ENCODE measurements at regions of chr6 and their contacts with region 1.

Region 1: DNA sequence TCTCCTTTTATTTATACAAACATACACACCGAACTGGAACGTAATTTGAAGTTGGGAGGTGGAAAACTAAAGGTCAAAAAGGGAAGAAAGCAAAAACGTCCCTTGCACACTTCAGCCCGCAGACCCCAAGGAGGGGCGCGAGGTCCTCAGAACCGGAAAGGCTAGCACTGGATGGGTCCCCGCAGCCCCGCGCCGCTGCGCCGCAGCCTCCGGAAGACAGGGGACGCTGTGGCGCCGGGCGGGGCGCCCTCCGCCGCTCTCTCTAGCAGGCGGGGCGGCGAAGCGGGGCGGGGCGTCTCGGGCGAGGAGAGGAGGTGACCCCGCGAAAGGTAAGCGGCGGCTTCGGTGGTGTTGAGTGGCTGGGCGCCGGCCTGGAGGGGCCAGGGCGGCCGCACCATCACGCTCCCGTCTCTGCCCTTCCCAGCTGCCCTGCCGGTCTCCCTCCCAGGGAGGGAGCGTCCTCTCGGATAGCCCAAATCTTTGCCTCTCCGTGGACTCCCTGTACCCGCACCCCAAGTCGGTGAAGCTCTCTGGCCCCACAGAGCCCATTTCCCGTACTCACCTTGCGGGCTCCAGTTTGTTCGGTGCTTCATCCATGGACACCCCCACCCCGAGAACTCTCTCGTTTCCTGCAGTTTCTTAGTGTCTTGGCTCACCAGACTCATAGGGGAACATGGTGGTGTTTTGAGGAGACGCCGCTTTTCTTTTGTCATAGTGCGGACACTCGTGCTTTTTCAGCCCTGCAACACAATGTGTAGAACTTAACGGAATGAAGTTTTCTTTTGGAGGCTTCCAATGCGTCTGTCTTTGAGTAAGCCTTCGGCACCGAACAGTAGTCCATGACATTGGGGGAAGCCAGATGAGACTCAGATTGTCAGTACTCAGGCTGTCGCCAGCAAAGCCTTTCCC is at the start of gene SMIM8:
- H3K4me3 ChIP-seq: peak within 1 kb of the TSS; percentile 77
- H3K27ac ChIP-seq: peak within 1 kb of the TSS; percentile 65
- H3K4me1 ChIP-seq: no peaks in the 10 kb centered on the region
- CTCF ChIP-seq: peak; percentile 96

Region 2: GRCh38 chr6:87308970-87309369 is 13.6 kb before region 1 on chr6:
- CTCF ChIA-PET with region 1: interaction called, 15 read pairs
- POLR2A ChIA-PET with region 1: no interaction called
- H3K4me3 ChIP-seq: no peak overlapping the region
- H3K27ac ChIP-seq: no peak overlapping the region
- H3K4me1 ChIP-seq: no peaks in the 10 kb centered on the region
- CTCF ChIP-seq: no peak

Region 3: DNA sequence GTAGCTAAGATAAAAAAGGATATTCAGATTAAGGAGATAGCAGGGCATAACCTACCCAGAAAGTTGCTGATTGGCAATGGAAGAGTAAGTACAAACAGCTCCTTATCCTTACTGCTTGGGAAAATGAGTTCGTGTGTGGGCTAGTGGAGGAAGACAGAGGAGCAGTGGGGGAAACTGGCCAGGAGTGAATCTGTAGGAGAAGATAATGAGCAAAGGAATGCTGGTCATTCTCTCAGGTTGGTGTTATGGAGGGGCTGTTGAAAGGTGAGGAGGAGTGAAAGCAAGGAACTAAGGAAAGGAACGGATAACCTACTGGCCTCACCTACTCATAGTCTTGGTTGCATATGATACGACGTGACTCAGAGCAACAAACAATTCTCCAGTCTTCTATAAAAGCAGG is 13.8 kb after region 1 on chr6:
- CTCF ChIA-PET with region 1: interaction called, 14 read pairs
- POLR2A ChIA-PET with region 1: no interaction called
- H3K4me3 ChIP-seq: no peak overlapping the region
- H3K27ac ChIP-seq: no peak overlapping the region
- H3K4me1 ChIP-seq: peaks cover 5% of the 10 kb centered on the region; the same call in 1 of the 2 replicates
- CTCF ChIP-seq: no peak

Region 4: GRCh38 chr6:87341899-87342298 is 19.3 kb after region 1 on chr6:
- CTCF ChIA-PET with region 1: interaction called, 14 read pairs
- POLR2A ChIA-PET with region 1: no interaction called
- H3K4me3 ChIP-seq: no peak overlapping the region
- H3K27ac ChIP-seq: no peak overlapping the region
- H3K4me1 ChIP-seq: peaks cover 11% of the 10 kb centered on the region; the same call in 1 of the 2 replicates
- CTCF ChIP-seq: no peak

Region 5: DNA sequence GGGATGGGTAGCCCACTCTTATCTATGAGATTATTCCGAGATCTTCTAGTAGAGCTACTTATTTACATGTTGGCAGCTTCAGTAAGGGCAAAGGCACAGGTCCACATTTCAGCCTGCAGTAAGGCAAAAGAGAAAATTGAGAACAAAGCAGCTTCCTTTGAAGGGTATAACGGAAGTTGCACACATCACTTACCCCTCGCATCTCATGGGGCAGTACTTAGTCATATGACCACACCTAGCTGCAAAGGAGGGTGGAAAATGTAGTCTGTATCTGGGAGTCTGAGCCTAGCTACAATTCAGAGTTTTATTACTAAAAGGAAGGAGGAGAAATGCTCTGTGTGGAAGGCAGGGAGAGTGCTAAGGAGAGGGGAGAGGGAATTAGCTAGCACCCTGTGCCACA is 754.7 kb after region 1 on chr6:
- CTCF ChIA-PET with region 1: no interaction called
- POLR2A ChIA-PET with region 1: no interaction called
- H3K4me3 ChIP-seq: no peak overlapping the region
- H3K27ac ChIP-seq: no peak overlapping the region
- H3K4me1 ChIP-seq: no peaks in the 10 kb centered on the region
- CTCF ChIP-seq: no peak